Right ventricle myocardium inferior (tissue), 1 donor: ENCODE measurements at regions of chr1 and their contacts with region 1.

Region 1: DNA sequence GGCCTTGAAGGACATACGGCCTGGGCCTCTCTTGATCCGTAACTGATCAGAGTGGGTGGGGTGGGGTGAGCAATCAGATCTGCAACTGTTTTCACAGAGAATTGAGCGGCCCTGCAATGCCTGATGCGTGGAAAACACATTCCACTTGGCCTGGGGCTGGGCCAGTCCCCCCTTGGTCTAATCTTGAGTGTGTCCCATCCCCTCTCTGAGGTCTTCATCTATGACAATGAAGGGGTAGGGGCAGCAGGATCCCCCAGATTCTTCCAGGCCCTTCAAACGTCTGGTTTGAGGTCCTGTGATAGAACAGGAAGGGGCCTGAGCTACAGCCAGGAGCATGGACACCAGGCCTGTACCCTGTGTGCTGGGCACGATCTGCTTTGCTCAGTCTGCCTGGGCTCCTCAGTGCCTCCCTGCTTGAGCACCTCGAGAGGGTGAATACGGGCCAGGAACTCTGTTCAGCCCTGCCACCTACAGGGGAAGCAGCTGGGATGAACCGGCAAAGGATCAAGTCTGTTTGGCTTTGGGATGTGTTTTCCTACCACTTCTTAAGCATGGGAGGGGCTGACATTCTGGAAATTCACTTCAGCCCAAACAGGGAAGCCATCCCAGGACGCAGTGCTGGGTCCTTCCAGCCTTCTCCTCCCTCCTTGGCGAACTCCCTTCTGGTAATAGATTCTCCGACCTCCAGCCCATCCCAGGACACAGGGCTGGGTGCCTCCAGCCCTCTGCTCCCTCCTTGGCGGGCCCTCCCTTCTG is 56.0 kb upstream of the SELENON start:
- DNase-seq: peak; percentile 79
- ATAC-seq: peak; percentile 87

Region 2: DNA sequence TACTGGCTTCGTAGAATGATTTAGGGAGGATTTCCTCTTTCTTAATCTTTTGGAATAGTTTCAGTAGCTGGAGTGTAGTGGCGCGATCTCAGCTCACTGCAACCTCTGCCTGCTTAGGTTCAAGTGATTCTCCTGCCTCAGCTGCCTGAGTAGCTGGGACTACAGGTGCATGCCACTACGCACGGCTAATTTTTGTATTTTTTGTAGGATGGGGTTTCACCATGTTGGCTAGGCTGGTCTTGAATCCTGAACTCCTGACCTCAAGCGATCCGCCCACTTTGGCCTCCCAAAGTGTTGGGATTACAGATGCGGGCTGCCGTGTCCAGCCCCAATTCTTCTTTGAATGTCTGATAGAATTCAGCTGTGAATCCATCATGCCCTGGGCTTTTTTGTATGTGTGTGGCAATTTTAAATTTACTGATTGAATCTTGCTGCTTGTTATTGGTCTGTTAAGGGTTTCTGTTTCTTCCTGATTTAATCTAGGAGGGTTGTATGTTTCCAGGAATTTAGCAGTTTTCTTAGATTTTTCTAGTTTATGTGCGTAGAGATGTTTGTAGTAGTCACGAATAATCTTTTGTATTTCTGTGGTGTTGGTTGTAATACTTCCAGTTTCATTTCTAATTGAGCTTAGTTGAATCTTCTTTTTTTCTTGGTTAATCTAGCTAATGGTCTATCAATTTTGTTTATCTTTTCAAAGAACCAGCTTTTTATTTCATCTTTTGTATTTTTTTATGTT is 112.1 kb before region 1 on chr1:
- intact Hi-C with region 1: no loop called
- DNase-seq: no peak
- ATAC-seq: peak; percentile 79

Region 3: DNA sequence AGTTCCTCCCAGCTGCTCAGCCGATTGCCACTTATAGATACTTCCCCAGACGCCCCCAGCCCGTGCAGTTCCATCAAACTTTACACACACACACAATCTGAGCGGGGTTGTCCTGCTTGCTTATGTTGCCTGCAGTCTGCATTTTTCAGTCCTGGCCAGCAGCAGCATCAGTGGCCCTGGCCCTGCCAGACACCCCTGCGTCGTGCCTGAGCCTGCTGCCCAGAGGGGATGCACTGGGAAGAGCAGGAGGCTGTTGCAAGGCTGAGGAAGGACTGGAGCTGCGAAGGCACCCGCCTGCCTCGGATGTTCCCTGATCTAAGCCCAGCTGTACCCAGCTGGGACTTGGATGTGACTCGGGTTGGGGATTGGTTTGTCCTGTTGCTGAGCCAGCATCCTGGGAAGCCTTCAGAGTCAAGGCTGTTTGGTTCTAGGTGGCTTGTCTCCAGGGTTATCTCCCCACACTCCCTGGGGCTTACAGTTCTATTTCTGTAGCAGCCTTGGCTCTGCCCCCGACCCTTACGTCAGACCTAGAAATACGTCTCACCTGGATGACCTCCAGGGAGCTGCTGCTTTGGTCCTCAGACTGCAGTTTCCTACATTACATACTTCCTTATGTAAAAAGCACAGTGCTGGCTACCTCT is 85.1 kb before region 1 on chr1:
- intact Hi-C with region 1: no loop called
- DNase-seq: peak; percentile 81
- ATAC-seq: peak; percentile 92

Region 4: GRCh38 chr1:25727635-25728330 is 16.2 kb before region 1 on chr1:
- intact Hi-C with region 1: loop called (anchors 1 kb)
- DNase-seq: peak; percentile 85
- ATAC-seq: peak; percentile 91

Region 5: DNA sequence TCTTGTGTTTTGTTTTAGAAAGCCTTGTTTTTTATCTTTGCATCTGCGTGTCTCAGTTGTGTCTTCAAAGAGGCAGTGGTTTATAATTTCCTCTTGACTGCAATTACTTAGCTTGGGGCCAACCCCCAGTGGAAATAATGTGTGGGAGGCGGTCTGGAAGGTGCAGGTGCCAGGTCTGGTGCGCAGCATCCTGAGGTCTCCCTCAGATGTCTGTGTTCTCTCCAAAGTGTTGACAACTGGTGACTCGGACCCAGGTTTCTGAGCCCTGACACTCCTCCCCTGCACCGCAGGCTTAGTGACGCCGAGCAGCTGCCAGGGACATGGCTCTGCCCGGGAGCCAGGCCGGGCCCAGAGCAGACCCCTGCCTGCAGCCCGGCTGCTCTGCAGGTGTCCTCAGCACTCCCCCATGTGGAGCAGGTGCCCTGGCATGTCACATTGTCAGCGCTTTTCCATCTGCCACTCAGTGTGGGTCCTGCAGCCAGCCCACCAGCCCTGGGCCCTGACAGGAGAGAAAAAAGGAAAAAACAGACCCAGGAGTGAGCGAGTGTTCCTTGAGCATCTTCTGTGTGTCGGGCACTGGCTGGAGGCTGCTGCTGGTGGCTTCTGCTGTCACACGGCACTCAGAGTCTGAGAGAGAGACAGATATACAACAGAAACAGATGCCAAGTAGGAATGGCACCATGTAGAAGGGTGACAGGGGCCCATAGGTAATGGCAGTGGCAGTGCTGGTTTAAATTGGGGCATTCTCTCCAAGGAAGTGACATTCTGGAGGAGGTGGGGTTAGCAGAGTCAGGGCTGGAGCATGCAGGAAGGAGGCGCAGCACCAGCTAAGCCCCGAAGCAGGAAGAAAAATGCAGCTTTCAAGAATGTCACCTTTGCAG is 31.2 kb after region 1 on chr1:
- intact Hi-C with region 1: no loop called
- DNase-seq: no peak
- ATAC-seq: no peak